Lower leg skin (tissue), 4 donors: ENCODE measurements at regions of chr11 and their contacts with region 1.

Region 1: GRCh38 chr11:116442238-116442752 is 330.5 kb downstream of the BUD13 start:
- DNase-seq: no peak
- H3K4me3 ChIP-seq: no peak overlapping the region
- CTCF ChIP-seq: no peak
- POLR2A ChIP-seq: no peak

Region 2: GRCh38 chr11:116397602-116398084 is 44.7 kb before region 1 on chr11:
- intact Hi-C with region 1: loop called (anchors 5 kb)
- DNase-seq: no peak
- H3K4me3 ChIP-seq: no peak overlapping the region
- CTCF ChIP-seq: no peak
- POLR2A ChIP-seq: no peak